Panc1 (cell line): ENCODE measurements at regions of chr15 and their contacts with region 1.

Region 1: GRCh38 chr15:34304613-34305012 is 33.0 kb downstream of the SLC12A6 start:
- DNase-seq: no peak
- ATAC-seq: no peak
- H3K4me3 ChIP-seq: no peak overlapping the region
- H3K27ac ChIP-seq: no peak overlapping the region
- H3K4me1 ChIP-seq: no peaks in the 10 kb centered on the region
- H3K27me3 ChIP-seq: no peaks in the 10 kb centered on the region
- CTCF ChIP-seq: no peak

Region 2: GRCh38 chr15:34318277-34319079 is 13.9 kb after region 1 on chr15:
- CTCF ChIA-PET with region 1: interaction called, 5 read pairs
- POLR2A ChIA-PET with region 1: interaction called, 15 read pairs
- in situ Hi-C with region 1: no loop called
- intact Hi-C with region 1: no loop called
- DNase-seq: no peak
- ATAC-seq: peak; percentile 97
- H3K4me3 ChIP-seq: peak overlapping the region; percentile 50 to 75
- H3K27ac ChIP-seq: peak overlapping the region; percentile 78
- H3K4me1 ChIP-seq: peaks cover 17% of the 10 kb centered on the region; the same call in 1 of the 2 replicates
- H3K27me3 ChIP-seq: no peaks in the 10 kb centered on the region
- CTCF ChIP-seq: no peak